ENCODE measurements at regions of chr1 and their contacts with region 1.

Region 1: GRCh38 chr1:154404984-154405761 is at the start of gene IL6R:
- DNase-seq: peak; percentile 83
- ATAC-seq: peak; percentile 83
- H3K4me3 ChIP-seq: peak within 1 kb of the TSS; percentile 55 to 89 (median 71)
- H3K27ac ChIP-seq: peak within 1 kb of the TSS; percentile 62
- H3K4me1 ChIP-seq: peaks cover 82% of the 10 kb centered on the region
- H3K27me3 ChIP-seq: peaks cover 0 to 22% of the 10 kb centered on the region in 2 experiments; a peak in 4 of 5 replicates
- CTCF ChIP-seq: peak; percentile 89
- EP300 ChIP-seq: peak in 1 of 2 experiments; percentile 23; a peak in 1 of 4 replicates
- POLR2A ChIP-seq: peak; percentile 54 to 59; a peak in 3 of 4 replicates
- RAD21 ChIP-seq: peak; percentile 75
- total RNA-seq, gene IL6R: 3.5 and 5.0 TPM in 2 replicates

Region 2: GRCh38 chr1:154352581-154353459 is 52.4 kb before region 1 on chr1:
- CTCF ChIA-PET with region 1: no interaction called
- POLR2A ChIA-PET with region 1: interaction called, 4 read pairs
- in situ Hi-C with region 1: no loop called
- intact Hi-C with region 1: loop called (anchors 10 kb)
- DNase-seq: no peak
- ATAC-seq: peak; percentile 70
- H3K4me3 ChIP-seq: peak overlapping the region; percentile 52 to 75 (median 55)
- H3K27ac ChIP-seq: no peak overlapping the region
- H3K4me1 ChIP-seq: peaks cover 52% of the 10 kb centered on the region
- H3K27me3 ChIP-seq: peaks cover 0 to 4% of the 10 kb centered on the region in 2 experiments; a peak in 1 of 5 replicates
- CTCF ChIP-seq: peak; percentile 33
- EP300 ChIP-seq: no peak
- POLR2A ChIP-seq: no peak
- RAD21 ChIP-seq: no peak

Region 3: GRCh38 chr1:154386643-154387352 is 18.4 kb before region 1 on chr1:
- CTCF ChIA-PET with region 1: no interaction called
- POLR2A ChIA-PET with region 1: interaction called, 11 read pairs
- in situ Hi-C with region 1: no loop called
- intact Hi-C with region 1: loop called (anchors 2 kb)
- DNase-seq: peak; percentile 77
- ATAC-seq: peak; percentile 95
- H3K4me3 ChIP-seq: peak overlapping the region; percentile 48 to 77 (median 51)
- H3K27ac ChIP-seq: peak overlapping the region; percentile 24
- H3K4me1 ChIP-seq: peaks cover 35% of the 10 kb centered on the region
- H3K27me3 ChIP-seq: no peaks in the 10 kb centered on the region
- CTCF ChIP-seq: no peak
- EP300 ChIP-seq: no peak
- POLR2A ChIP-seq: peak in 1 of 2 experiments; percentile 37; a peak in 1 of 4 replicates
- RAD21 ChIP-seq: no peak

Region 4: GRCh38 chr1:154419620-154420571 is 14.7 kb after region 1 on chr1:
- CTCF ChIA-PET with region 1: no interaction called
- POLR2A ChIA-PET with region 1: interaction called, 146 read pairs
- in situ Hi-C with region 1: no loop called
- intact Hi-C with region 1: loop called (anchors 1 kb)
- DNase-seq: peak; percentile 83
- ATAC-seq: peak; percentile 62
- H3K4me3 ChIP-seq: peak overlapping the region; percentile 2 to 68 (median 20); a peak in 5 of 6 replicates
- H3K27ac ChIP-seq: peak overlapping the region; percentile 85
- H3K4me1 ChIP-seq: peaks cover 83% of the 10 kb centered on the region
- H3K27me3 ChIP-seq: no peaks in the 10 kb centered on the region
- CTCF ChIP-seq: 0 out of 2 replicates have a peak, but pooled peaks have one; percentile 4
- EP300 ChIP-seq: peak in 1 of 2 experiments; percentile 81; a peak in 2 of 4 replicates
- POLR2A ChIP-seq: peak in 1 of 2 experiments; percentile 52; a peak in 2 of 4 replicates
- RAD21 ChIP-seq: no peak

Region 5: GRCh38 chr1:154430903-154431302 is 25.7 kb after region 1 on chr1:
- CTCF ChIA-PET with region 1: no interaction called
- POLR2A ChIA-PET with region 1: no interaction called
- in situ Hi-C with region 1: no loop called
- intact Hi-C with region 1: no loop called
- DNase-seq: no peak
- ATAC-seq: no peak
- H3K4me3 ChIP-seq: no peak overlapping the region
- H3K27ac ChIP-seq: no peak overlapping the region
- H3K4me1 ChIP-seq: peaks cover 26% of the 10 kb centered on the region
- H3K27me3 ChIP-seq: no peaks in the 10 kb centered on the region
- CTCF ChIP-seq: no peak
- EP300 ChIP-seq: no peak
- POLR2A ChIP-seq: no peak
- RAD21 ChIP-seq: no peak

Region 6: DNA sequence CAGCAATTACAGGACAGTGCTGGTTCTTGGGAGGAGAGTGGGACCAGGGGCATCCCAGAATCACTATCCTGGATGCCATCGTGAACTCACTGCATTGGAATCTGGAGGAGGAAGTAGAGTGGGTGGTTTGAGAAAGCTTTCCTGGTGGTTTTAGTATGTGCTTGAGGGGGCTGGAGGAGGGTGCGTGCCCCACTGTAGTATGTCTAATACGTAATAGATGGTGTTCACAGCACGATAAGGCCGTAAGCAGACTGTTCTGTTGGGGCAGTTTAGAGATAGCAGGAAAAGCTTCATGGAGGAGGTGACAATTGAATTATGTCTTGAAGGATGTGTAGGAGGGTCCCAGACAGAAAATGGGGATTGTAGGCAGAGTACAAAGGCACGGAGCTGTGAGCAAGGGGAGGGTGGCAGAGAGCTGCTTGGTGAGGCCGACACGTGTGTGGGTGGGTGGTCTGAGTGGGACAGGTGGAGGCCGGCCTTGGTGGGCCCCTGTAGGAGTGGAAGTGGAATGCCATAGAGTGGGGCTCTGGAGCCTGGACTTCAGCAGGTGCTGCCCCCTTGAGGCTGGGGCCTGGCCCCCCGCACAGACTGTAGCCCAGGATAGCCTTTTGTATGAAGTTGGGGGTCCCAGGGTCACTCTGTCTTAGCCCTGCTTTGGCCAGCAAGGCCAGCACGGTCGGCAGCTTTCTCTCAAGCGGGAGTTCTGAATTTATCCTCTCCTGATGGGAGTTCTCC is 37.0 kb after region 1 on chr1:
- CTCF ChIA-PET with region 1: interaction called, 12 read pairs
- POLR2A ChIA-PET with region 1: interaction called, 6 read pairs
- in situ Hi-C with region 1: no loop called
- intact Hi-C with region 1: no loop called
- DNase-seq: no peak
- ATAC-seq: peak; percentile 85
- H3K4me3 ChIP-seq: no peak overlapping the region
- H3K27ac ChIP-seq: no peak overlapping the region
- H3K4me1 ChIP-seq: peaks cover 19% of the 10 kb centered on the region
- H3K27me3 ChIP-seq: no peaks in the 10 kb centered on the region
- CTCF ChIP-seq: peak; percentile 66
- EP300 ChIP-seq: no peak
- POLR2A ChIP-seq: no peak
- RAD21 ChIP-seq: peak; percentile 41; the same call in 1 of the 2 replicates

Region 7: GRCh38 chr1:154453161-154453560 is 48.0 kb after region 1 on chr1:
- CTCF ChIA-PET with region 1: no interaction called
- POLR2A ChIA-PET with region 1: no interaction called
- in situ Hi-C with region 1: no loop called
- intact Hi-C with region 1: no loop called
- DNase-seq: no peak
- ATAC-seq: no peak
- H3K4me3 ChIP-seq: no peak overlapping the region
- H3K27ac ChIP-seq: no peak overlapping the region
- H3K4me1 ChIP-seq: peaks cover 12% of the 10 kb centered on the region
- H3K27me3 ChIP-seq: no peaks in the 10 kb centered on the region
- CTCF ChIP-seq: no peak
- EP300 ChIP-seq: no peak
- POLR2A ChIP-seq: no peak
- RAD21 ChIP-seq: no peak

Region 8: DNA sequence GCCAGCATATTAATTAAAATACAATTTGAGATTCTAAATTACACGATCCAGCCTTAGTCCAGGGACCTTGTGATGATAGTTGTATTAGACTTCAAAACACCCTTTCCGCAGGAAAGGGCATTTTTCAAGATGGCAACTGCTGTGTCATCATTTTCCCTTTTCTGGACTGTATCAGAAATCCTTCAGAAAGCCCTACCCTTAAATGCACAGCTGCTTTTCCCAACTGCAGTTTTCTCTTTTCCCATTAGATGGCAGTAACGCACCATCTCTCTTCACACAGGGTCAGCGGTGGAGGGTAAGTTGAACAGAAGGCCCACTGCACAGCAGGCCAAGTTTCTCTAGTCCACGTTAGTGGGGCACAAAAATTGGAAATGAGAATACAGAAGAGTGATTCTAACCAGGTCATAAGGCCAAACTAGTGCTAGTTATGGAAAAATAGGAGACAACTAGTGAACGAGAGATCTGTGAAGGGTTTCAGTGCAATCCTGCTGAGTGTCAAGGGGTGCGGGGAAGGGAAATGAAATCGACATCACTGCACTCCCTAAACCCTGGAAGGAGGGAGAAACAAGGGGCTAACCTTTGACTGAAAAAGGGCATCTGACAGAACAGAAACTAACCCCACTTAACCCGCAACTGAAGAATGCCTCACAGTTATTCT is 74.7 kb after region 1 on chr1:
- CTCF ChIA-PET with region 1: no interaction called
- POLR2A ChIA-PET with region 1: no interaction called
- in situ Hi-C with region 1: no loop called
- intact Hi-C with region 1: loop called (anchors 1 kb)
- DNase-seq: peak; percentile 74
- ATAC-seq: peak; percentile 94
- H3K4me3 ChIP-seq: no peak overlapping the region
- H3K27ac ChIP-seq: no peak overlapping the region
- H3K4me1 ChIP-seq: peaks cover 24% of the 10 kb centered on the region
- H3K27me3 ChIP-seq: peaks cover 0 to 3% of the 10 kb centered on the region in 2 experiments; a peak in 1 of 5 replicates
- CTCF ChIP-seq: peak; percentile 90
- EP300 ChIP-seq: no peak
- POLR2A ChIP-seq: no peak
- RAD21 ChIP-seq: peak; percentile 85